ENCODE measurements at regions of chrX and their contacts with region 1.

Region 1: GRCh38 chrX:41333744-41334259 is at the start of gene DDX3X:
- DNase-seq: peak; percentile 80 to 94 (median 87)
- ATAC-seq: peak; percentile 85
- H3K4me3 ChIP-seq: peak within 1 kb of the TSS; percentile 91
- H3K4me1 ChIP-seq: peaks cover 2% of the 10 kb centered on the region
- CTCF ChIP-seq: no peak
- total RNA-seq, gene DDX3X: 208 to 256 (median 250) TPM

Region 2: GRCh38 chrX:41441934-41442823 is 108.4 kb after region 1 on chrX:
- intact Hi-C with region 1: loop called in 1 of 2 experiments (anchors 10 kb)
- DNase-seq: peak; percentile 83 to 93 (median 90)
- ATAC-seq: peak; percentile 98
- H3K4me3 ChIP-seq: no peak overlapping the region
- H3K4me1 ChIP-seq: no peaks in the 10 kb centered on the region
- CTCF ChIP-seq: peak; percentile 35

Region 3: DNA sequence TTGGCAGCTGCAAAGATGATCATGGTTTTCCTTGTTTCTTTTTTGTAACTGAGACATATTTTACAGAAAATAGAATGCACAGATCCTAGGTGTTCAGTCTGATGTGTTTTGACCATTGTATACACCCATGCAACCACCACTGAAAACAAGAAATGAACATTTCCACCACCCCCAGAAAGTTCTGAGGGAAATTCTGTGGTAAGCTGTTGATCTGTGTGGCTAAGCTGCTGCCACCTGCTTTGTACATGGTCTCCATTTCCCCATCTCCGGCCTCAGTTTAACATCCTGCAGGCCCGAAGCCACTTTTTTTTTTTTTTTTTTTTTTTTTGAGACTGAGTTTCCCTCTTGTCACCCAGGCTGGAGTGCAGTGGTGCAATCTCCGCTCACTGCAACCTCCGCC is 178.6 kb after region 1 on chrX:
- intact Hi-C with region 1: no loop called
- DNase-seq: no peak
- ATAC-seq: peak; percentile 51
- H3K4me3 ChIP-seq: no peak overlapping the region
- H3K4me1 ChIP-seq: no peaks in the 10 kb centered on the region
- CTCF ChIP-seq: no peak